Activated CD4-positive, alpha-beta memory T cell treated with anti-CD3 and anti-CD28 coated beads, Interleukin-2, amount 10 ng/mL, durations not matched to agents 7 days and 5 days (primary cell): ENCODE measurements at regions of chr19 and their contacts with region 1.

Region 1: DNA sequence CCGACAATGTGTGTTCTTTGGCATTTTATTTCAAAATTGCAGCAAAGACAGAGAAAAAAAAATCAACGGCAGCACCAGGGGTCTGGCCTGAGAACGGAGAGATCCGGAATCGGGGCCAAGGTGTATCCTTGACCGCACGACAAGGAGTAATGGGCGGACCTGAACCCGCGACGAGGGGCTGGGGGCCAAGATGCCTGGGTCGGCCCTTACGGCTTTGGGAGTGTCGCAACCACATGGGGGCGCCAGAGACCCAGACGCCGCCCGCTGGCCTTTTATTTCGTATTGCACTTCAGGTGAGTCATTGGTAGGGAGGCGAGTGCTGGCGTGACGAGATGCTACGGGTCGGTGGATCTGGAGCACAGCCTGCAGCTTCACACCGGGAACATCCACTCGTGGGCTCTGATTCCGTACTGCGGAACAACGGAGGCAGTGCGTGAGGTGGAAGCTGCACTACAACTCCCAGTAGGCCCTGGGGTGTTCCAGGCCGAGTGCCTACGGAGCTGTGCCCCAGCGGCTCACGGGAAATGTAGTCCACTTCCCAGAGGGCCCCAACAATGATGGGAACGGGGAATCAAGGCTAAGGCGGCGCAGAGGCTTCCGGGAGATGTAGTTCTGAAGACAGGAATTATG is 15.7 kb downstream of the BCAT2 start:
- DNase-seq: peak; percentile 89
- H3K4me3 Mint-ChIP-seq: peak overlapping the region; percentile 90
- H3K27ac Mint-ChIP-seq: peak overlapping the region; percentile 80
- H3K4me1 Mint-ChIP-seq: peaks cover 8% of the 10 kb centered on the region
- H3K27me3 Mint-ChIP-seq: no peaks in the 10 kb centered on the region

Region 2: DNA sequence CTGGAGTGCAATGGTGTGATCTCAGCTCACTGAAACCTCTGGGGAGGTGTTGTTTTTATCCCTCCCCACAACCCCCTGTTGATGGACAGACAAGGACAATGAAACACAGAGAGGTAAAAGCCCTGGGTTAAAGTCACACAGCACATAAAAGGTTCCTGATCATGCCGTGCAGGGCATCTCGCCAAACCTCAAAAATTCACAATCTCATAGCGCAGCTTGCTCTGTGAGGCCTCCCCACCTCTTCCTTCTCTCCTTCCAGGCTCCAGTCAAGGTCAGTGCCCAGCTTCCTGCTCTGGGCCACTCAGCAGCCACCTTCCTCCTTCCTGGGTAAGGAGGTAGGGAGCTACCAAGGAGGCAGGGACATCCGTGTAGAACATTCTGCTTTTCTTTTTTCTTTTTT is 97.1 kb before region 1 on chr19:
- CTCF ChIA-PET with region 1: no interaction called
- POLR2A ChIA-PET with region 1: no interaction called
- DNase-seq: no peak
- H3K4me3 Mint-ChIP-seq: no peak overlapping the region
- H3K27ac Mint-ChIP-seq: no peak overlapping the region
- H3K4me1 Mint-ChIP-seq: peaks cover 6% of the 10 kb centered on the region
- H3K27me3 Mint-ChIP-seq: peaks cover 13% of the 10 kb centered on the region

Region 3: DNA sequence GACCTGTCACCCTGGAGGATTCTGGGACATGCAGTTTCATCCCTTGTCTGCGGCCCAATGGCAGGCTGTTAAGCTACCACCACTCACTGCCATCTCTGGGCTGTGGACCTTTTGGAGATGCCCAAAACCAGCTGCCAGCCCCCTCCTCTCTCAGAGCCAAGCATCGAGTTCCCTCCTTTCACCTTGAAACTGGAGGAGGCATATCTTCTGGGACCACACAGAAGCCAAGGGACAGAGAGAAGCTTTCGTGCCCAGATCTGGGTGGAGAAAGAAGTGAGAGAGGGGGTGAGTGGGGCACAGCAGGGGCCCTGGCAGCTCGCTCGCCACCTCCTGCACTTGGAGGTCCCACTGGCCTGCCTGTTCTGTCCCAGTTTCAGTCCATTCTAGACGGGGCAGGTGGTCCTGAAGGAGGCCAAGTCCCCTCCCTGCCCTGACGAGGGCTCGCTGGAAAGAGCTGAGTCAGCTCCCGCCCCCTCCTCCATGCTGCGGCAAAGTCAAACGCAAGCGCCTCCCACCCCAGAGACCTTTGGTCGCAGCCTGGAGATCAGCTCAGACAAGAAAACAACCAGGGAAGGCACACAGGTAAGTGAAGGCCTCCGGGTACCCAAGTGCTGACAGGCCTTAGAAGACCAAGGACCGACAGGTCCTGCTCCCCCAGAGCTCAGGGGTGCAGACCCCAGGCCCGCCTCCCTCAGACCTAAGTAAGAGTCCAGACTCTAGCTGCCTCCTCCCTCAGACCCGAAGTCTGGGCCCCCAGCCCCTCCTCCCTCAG is 11.8 kb after region 1 on chr19:
- CTCF ChIA-PET with region 1: interaction called, 34 read pairs
- POLR2A ChIA-PET with region 1: interaction called, 22 read pairs
- DNase-seq: no peak
- H3K4me3 Mint-ChIP-seq: no peak overlapping the region
- H3K27ac Mint-ChIP-seq: no peak overlapping the region
- H3K4me1 Mint-ChIP-seq: peaks cover 25% of the 10 kb centered on the region
- H3K27me3 Mint-ChIP-seq: no peaks in the 10 kb centered on the region

Region 4: DNA sequence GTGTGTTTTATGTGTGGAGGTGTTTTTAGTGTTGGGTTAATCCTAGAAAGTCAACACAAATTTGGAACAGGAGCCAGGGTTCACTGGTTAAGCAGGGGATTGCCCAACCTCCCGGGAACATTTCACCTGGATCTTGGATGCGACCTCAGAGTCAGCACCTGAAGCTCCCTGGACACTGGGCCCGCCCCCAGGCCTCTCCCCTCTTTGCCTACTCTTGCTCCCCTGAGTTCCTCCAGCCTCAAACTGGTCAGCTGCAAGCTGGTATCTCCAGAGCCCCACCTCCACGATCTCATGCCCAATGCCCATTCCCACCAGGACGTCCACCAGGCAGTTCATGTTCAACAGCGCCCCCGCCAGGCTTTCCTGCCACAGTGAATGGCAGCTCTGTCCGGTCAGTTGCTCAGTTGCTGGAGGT is 31.4 kb after region 1 on chr19:
- CTCF ChIA-PET with region 1: interaction called, 11 read pairs
- POLR2A ChIA-PET with region 1: no interaction called
- DNase-seq: no peak
- H3K4me3 Mint-ChIP-seq: no peak overlapping the region
- H3K27ac Mint-ChIP-seq: no peak overlapping the region
- H3K4me1 Mint-ChIP-seq: no peaks in the 10 kb centered on the region
- H3K27me3 Mint-ChIP-seq: peaks cover 2% of the 10 kb centered on the region

Region 5: DNA sequence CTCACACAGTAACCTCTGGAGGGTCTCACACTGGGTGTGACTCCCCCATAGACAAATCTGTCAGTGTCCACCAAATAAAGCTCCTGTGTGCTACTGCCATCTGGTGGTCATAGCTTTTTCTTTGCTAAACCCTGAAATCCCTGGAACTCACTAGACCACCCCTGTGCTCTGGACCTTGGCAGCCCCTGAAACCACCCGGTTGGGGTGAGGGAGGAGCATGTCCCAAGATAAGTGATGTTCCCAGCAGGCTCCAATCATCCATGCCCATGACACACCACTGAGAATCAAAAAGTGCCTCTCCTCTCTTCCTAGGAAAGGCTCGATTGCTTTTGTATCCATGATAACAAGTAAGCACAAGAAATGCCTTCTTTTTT is 47.6 kb after region 1 on chr19:
- CTCF ChIA-PET with region 1: interaction called, 109 read pairs
- POLR2A ChIA-PET with region 1: interaction called, 8 read pairs
- DNase-seq: peak; percentile 49
- H3K4me3 Mint-ChIP-seq: no peak overlapping the region
- H3K27ac Mint-ChIP-seq: no peak overlapping the region
- H3K4me1 Mint-ChIP-seq: peaks cover under 1% of the 10 kb centered on the region
- H3K27me3 Mint-ChIP-seq: no peaks in the 10 kb centered on the region

Region 6: GRCh38 chr19:48925240-48925843 is 130.2 kb after region 1 on chr19:
- CTCF ChIA-PET with region 1: no interaction called
- POLR2A ChIA-PET with region 1: no interaction called
- DNase-seq: no peak
- H3K4me3 Mint-ChIP-seq: no peak overlapping the region
- H3K27ac Mint-ChIP-seq: no peak overlapping the region
- H3K4me1 Mint-ChIP-seq: peaks cover 7% of the 10 kb centered on the region
- H3K27me3 Mint-ChIP-seq: no peaks in the 10 kb centered on the region